OCI-LY7 (cell line): ENCODE measurements at regions of chr6 and their contacts with region 1.

Region 1: GRCh38 chr6:62285612-62286469 is at the start of gene KHDRBS2:
- DNase-seq: peak; percentile 91
- H3K4me3 ChIP-seq: peak within 1 kb of the TSS; percentile 74
- H3K27ac ChIP-seq: no peak within 1 kb of the TSS
- H3K4me1 ChIP-seq: peaks cover 10% of the 10 kb centered on the region
- CTCF ChIP-seq: no peak
- total RNA-seq, gene KHDRBS2: 1.4 and 1.7 TPM in 2 replicates

Region 2: GRCh38 chr6:61555993-61556392 is 729.8 kb before region 1 on chr6:
- CTCF ChIA-PET with region 1: no interaction called
- POLR2A ChIA-PET with region 1: no interaction called
- intact Hi-C with region 1: no loop called
- DNase-seq: no peak
- H3K4me3 ChIP-seq: no peak overlapping the region
- H3K27ac ChIP-seq: no peak overlapping the region
- H3K4me1 ChIP-seq: no peaks in the 10 kb centered on the region
- CTCF ChIP-seq: no peak

Region 3: DNA sequence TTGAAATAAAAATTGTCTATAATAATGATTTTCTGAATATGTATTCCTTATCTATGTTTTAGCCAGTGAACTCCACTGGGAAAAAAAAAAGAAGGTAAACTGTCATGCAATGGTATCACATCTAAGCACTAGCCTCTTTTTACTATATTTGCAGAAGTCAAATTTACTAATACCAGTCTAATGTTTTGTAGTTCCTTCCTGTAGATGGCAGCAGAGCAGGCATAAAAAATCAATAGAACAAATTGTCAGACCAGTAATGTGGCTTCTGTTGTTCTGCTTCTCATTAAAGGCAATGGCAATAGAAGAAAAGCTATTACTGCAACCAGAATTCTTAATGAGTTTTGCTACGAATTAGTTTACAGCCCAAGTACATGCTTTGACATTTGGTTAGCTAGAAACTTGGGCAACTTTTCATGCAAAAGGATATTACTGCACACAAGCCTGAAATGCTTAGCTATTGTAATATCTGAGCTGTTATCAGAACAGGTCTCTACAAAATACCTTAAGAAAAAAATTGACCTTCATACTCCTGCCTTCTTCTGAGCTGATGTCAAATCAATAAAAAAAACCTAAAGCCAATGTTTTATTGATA is 476.7 kb before region 1 on chr6:
- CTCF ChIA-PET with region 1: no interaction called
- POLR2A ChIA-PET with region 1: no interaction called
- intact Hi-C with region 1: loop called (anchors 5 kb)
- DNase-seq: peak; percentile 23
- H3K4me3 ChIP-seq: no peak overlapping the region
- H3K27ac ChIP-seq: no peak overlapping the region
- H3K4me1 ChIP-seq: no peaks in the 10 kb centered on the region
- CTCF ChIP-seq: peak; percentile 81

Region 4: DNA sequence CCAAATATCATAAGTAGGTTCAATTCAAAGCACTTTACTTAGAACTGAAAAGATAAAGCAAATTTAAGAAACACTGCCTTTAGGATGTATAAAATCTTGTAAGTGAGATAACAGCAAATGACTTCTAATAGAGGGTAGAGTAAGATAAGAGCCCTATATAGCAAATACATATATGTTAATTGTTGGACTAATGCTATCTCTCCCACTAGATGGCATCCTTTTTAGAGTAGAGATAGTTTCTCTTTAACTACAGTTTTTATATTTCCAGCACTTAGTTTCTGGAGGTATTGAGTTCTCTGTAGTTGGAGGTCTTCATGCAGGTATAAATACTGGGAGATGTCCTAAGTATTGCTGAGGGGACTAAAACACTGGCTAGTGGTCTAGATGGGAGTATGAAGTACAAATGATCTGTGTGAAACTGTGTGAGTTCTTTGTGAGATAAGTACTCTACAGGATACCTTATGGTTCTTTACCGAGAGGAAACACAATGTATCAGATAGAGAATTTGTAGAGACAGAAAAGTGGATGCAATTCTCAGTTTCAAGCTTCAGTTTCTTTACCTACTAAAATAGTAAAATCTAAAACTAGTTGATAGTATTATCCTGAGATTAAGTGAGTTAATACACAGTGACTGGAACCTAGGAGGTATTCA is 399.1 kb before region 1 on chr6:
- CTCF ChIA-PET with region 1: no interaction called
- POLR2A ChIA-PET with region 1: no interaction called
- intact Hi-C with region 1: loop called (anchors 5 kb)
- DNase-seq: peak; percentile 6
- H3K4me3 ChIP-seq: no peak overlapping the region
- H3K27ac ChIP-seq: no peak overlapping the region
- H3K4me1 ChIP-seq: no peaks in the 10 kb centered on the region
- CTCF ChIP-seq: peak; percentile 69

Region 5: GRCh38 chr6:62298745-62299392 is 13.0 kb after region 1 on chr6:
- CTCF ChIA-PET with region 1: interaction called, 3 read pairs
- POLR2A ChIA-PET with region 1: interaction called, 16 read pairs
- intact Hi-C with region 1: no loop called
- DNase-seq: peak; percentile 74
- H3K4me3 ChIP-seq: peak overlapping the region; percentile 36
- H3K27ac ChIP-seq: peak overlapping the region; percentile 70
- H3K4me1 ChIP-seq: peaks cover 34% of the 10 kb centered on the region
- CTCF ChIP-seq: no peak

Region 6: DNA sequence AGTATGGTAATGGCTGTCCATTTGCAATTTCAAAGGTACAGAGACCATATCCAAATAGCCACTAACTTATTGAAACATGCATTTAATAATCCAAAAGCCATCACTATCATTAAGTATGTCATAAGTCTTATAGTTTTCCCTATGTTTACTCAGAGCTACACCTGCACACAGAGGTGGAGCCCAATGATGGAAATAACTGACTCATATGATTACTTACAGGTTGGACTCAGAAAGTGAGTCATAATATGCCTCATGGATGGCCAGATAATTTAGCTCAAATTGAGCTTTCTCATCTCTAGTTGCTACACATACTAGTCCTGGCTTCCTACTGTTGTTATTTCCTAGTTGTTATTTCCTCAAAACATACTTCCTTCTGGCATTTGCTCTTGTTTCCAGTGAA is 104.6 kb after region 1 on chr6:
- CTCF ChIA-PET with region 1: no interaction called
- POLR2A ChIA-PET with region 1: interaction called, 10 read pairs
- intact Hi-C with region 1: no loop called
- DNase-seq: no peak
- H3K4me3 ChIP-seq: peak overlapping the region; percentile 1
- H3K27ac ChIP-seq: peak overlapping the region; percentile 82
- H3K4me1 ChIP-seq: peaks cover 42% of the 10 kb centered on the region
- CTCF ChIP-seq: no peak